Gastrocnemius medialis (tissue), 4 donors: ENCODE measurements at regions of chr7 and their contacts with region 1.

Region 1: GRCh38 chr7:73842247-73842895 is at the start of gene METTL27:
- DNase-seq: peak; percentile 91 to 92
- ATAC-seq: peak; percentile 94 to 98
- H3K4me3 ChIP-seq: peak within 1 kb of the TSS; percentile 64 to 82 (median 72)
- H3K27ac ChIP-seq: peak within 1 kb of the TSS; percentile 66 to 73 (median 66)
- H3K4me1 ChIP-seq: peaks cover 6 to 7% of the 10 kb centered on the region in 2 donors
- H3K27me3 ChIP-seq: no peaks in the 10 kb centered on the region
- CTCF ChIP-seq: no peak
- POLR2A ChIP-seq: peak; percentile 51 to 63
- total RNA-seq, gene METTL27: 0.36 to 1.5 (median 0.53) TPM

Region 2: GRCh38 chr7:73623798-73624668 is 218.3 kb before region 1 on chr7 and contains the start of gene MLXIPL:
- in situ Hi-C with region 1: no loop called
- intact Hi-C with region 1: loop called (anchors 10 kb)
- DNase-seq: peak; percentile 84 to 89
- ATAC-seq: peak; percentile 68 to 72
- H3K4me3 ChIP-seq: peak within 1 kb of the TSS; percentile 73 to 88 (median 77)
- H3K27ac ChIP-seq: peak within 1 kb of the TSS; percentile 83 to 93 (median 92)
- H3K4me1 ChIP-seq: peaks cover 6 to 8% of the 10 kb centered on the region in 2 donors
- H3K27me3 ChIP-seq: peaks cover 0 to 15% (median 14%) of the 10 kb centered on the region in 3 donors
- CTCF ChIP-seq: no peak
- POLR2A ChIP-seq: peak; percentile 92 to 93
- total RNA-seq, gene MLXIPL: 7.6 to 107 (median 29.2) TPM